CD14-positive monocyte (primary cell): ENCODE measurements at regions of chr5 and their contacts with region 1.

Region 1: DNA sequence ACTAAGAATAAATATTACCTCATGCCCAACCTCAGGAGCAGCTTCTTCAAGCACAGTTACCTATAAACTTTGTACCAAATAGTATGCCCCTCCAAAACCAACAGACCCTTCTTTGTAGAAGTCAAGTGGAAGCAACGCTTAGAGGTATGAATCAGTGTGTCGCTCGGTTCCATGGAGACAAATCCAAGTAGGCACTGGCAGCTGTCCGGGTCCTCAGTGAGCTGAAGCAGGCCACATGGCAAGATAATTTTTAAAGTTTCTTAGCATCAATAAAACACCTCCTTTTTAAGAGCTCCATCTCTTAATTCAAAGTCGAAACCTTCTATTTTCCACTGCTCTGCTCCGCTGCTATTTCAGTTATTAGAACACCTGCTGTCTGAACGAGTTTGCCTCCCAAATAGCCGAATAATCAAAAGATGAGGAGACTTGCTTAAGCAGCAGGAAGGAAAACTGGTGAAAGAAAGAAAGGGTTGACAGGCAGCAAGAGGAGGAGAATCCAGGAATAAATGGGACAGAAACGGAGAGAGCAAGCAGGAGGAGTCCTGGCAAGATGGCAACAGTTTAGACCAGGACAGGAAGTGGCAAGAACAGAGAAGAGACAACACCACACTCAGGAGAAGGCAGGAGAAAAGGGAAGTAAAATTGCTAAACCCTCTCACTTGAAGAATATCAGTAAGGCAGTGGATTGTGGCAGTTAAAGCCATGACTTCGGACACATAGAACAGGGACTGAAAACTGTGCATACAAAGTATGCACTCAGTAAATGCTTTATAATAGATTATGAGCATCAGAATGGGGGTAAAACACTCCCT is 65.0 kb downstream of the PPP2R2B start:
- DNase-seq: peak; percentile 1 to 19 (median 4)
- H3K4me3 ChIP-seq: peak overlapping the region in 1 of 3 experiments; percentile 46
- H3K4me3 Mint-ChIP-seq: peak overlapping the region in 1 of 2 donors; percentile 64
- H3K27ac ChIP-seq: no peak overlapping the region
- H3K27ac Mint-ChIP-seq: no peak overlapping the region
- H3K4me1 ChIP-seq: peaks cover 6 to 21% of the 10 kb centered on the region in 2 donors
- H3K4me1 Mint-ChIP-seq: peaks cover 20% of the 10 kb centered on the region
- H3K27me3 ChIP-seq: no peaks in the 10 kb centered on the region
- H3K27me3 Mint-ChIP-seq: no peaks in the 10 kb centered on the region
- CTCF ChIP-seq: no peak

Region 2: DNA sequence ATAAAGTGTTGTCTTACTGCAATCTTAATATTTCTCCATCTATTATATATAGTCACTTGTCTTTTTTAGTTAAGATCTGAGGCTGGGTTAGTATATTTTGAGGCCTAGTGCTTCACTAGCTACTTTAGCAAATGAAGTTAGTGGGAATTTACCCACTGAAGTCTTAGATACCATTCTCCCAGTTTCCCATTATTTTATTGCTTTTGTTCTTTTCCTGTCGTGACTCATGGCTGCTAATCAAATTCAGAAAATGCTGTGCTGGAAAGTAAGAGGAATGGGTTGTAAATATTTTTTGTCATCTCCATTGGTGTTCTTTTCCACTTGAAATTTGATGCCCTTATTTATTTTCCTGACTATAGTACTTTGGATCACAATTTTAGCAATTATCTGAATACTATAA is 352.2 kb before region 1 on chr5:
- intact Hi-C with region 1: no loop called
- DNase-seq: no peak
- H3K4me3 ChIP-seq: no peak overlapping the region
- H3K4me3 Mint-ChIP-seq: no peak overlapping the region
- H3K27ac ChIP-seq: no peak overlapping the region
- H3K27ac Mint-ChIP-seq: no peak overlapping the region
- H3K4me1 ChIP-seq: no peaks in the 10 kb centered on the region
- H3K4me1 Mint-ChIP-seq: no peaks in the 10 kb centered on the region
- H3K27me3 ChIP-seq: no peaks in the 10 kb centered on the region
- H3K27me3 Mint-ChIP-seq: no peaks in the 10 kb centered on the region
- CTCF ChIP-seq: no peak

Region 3: GRCh38 chr5:146675636-146676035 is 137.9 kb before region 1 on chr5:
- intact Hi-C with region 1: loop called in 1 of 2 experiments (anchors 10 kb)
- DNase-seq: no peak
- H3K4me3 ChIP-seq: no peak overlapping the region
- H3K4me3 Mint-ChIP-seq: no peak overlapping the region
- H3K27ac ChIP-seq: no peak overlapping the region
- H3K27ac Mint-ChIP-seq: no peak overlapping the region
- H3K4me1 ChIP-seq: no peaks in the 10 kb centered on the region
- H3K4me1 Mint-ChIP-seq: no peaks in the 10 kb centered on the region
- H3K27me3 ChIP-seq: no peaks in the 10 kb centered on the region
- H3K27me3 Mint-ChIP-seq: no peaks in the 10 kb centered on the region
- CTCF ChIP-seq: no peak

Region 4: DNA sequence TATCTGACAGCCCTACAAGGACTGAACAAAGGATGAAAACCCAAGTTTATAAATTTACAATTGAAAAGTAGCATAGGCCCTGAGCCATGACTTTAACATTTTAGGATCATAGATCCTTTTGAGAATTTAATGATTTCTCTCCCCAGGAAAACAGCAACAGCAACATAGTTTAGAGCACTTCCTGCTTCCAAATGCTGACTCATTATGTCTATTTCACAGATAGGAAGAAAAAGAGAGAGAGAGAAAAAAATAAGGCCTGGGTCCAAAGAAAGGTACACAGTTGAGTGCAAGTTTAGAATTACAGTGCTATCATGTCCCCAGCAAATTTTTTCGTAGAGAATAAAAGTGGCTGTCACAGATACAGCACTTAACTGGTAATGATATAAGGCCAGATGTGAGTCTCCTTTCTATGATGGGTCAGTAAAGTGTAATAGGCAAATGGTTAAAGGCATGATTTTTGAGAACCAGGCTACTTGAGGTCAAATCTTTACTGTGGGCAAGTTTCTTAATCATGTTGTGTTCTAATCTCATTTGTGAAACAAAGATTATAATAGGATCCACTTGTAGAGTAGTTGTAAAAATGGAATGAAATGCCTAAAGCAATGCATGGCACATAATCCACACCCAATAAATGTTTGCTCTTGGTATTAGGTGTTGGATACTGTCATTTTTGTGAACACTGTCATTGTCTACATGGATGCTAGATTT is 77.3 kb after region 1 on chr5:
- intact Hi-C with region 1: no loop called
- DNase-seq: peak in 1 of 3 donors; percentile 1
- H3K4me3 ChIP-seq: no peak overlapping the region
- H3K4me3 Mint-ChIP-seq: no peak overlapping the region
- H3K27ac ChIP-seq: no peak overlapping the region
- H3K27ac Mint-ChIP-seq: no peak overlapping the region
- H3K4me1 ChIP-seq: peaks cover 8 to 12% of the 10 kb centered on the region in 2 donors
- H3K4me1 Mint-ChIP-seq: peaks cover 11% of the 10 kb centered on the region
- H3K27me3 ChIP-seq: no peaks in the 10 kb centered on the region
- H3K27me3 Mint-ChIP-seq: no peaks in the 10 kb centered on the region
- CTCF ChIP-seq: no peak

Region 5: DNA sequence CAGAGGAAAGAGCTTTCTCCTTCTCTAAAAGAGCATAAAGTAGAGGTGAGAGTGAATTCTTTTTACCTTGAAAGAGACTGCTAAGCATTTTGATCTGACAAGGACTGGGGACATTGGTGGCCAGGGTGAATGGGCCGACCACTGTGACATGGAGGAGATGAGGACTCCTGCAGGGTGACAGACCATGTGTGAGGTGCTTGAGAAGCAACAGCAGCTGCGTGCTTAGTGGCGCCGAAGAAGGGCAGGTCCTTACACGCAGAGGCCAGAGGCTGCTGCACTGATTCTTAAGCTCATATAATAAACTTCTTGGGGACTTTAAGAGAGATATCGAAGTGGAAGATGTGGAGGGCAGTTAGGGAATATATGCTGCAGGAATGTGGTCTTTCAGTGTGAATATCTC is 977.6 kb after region 1 on chr5:
- intact Hi-C with region 1: no loop called
- DNase-seq: no peak
- H3K4me3 ChIP-seq: no peak overlapping the region
- H3K4me3 Mint-ChIP-seq: no peak overlapping the region
- H3K27ac ChIP-seq: no peak overlapping the region
- H3K27ac Mint-ChIP-seq: no peak overlapping the region
- H3K4me1 ChIP-seq: no peaks in the 10 kb centered on the region
- H3K4me1 Mint-ChIP-seq: peaks cover 3% of the 10 kb centered on the region
- H3K27me3 ChIP-seq: no peaks in the 10 kb centered on the region
- H3K27me3 Mint-ChIP-seq: peaks cover 0 to 3% (median 0%) of the 10 kb centered on the region in 3 donors
- CTCF ChIP-seq: no peak